Stomach (tissue), 19 donors: ENCODE measurements at regions of chr16 and their contacts with region 1.

Region 1: GRCh38 chr16:58198022-58198683 is at the start of gene CSNK2A2:
- DNase-seq: peak; percentile 75 to 91
- H3K4me3 ChIP-seq: peak within 1 kb of the TSS; percentile 77 to 98 (median 86)
- H3K27ac ChIP-seq: peak within 1 kb of the TSS in 4 of 5 donors; percentile 66 to 77 (median 71)
- H3K4me1 ChIP-seq: peaks cover 8 to 42% (median 25%) of the 10 kb centered on the region in 4 donors
- H3K27me3 ChIP-seq: peaks cover 0 to 6% (median 0%) of the 10 kb centered on the region in 3 donors
- CTCF ChIP-seq: peak in 2 of 7 experiments; percentile 18 to 72
- EP300 ChIP-seq: no peak
- POLR2A ChIP-seq: no peak
- total RNA-seq, gene CSNK2A2: 13.4 to 83.0 (median 48.3) TPM

Region 2: GRCh38 chr16:58137581-58137980 is 60.6 kb before region 1 on chr16:
- intact Hi-C with region 1: loop called (anchors 10 kb)
- DNase-seq: no peak
- H3K4me3 ChIP-seq: no peak overlapping the region
- H3K27ac ChIP-seq: no peak overlapping the region
- H3K4me1 ChIP-seq: no peaks in the 10 kb centered on the region
- H3K27me3 ChIP-seq: no peaks in the 10 kb centered on the region
- CTCF ChIP-seq: no peak
- EP300 ChIP-seq: no peak
- POLR2A ChIP-seq: no peak

Region 3: GRCh38 chr16:58280836-58281301 is 82.7 kb after region 1 on chr16:
- intact Hi-C with region 1: no loop called
- DNase-seq: peak; percentile 19 to 67
- H3K4me3 ChIP-seq: no peak overlapping the region
- H3K27ac ChIP-seq: peak overlapping the region in 3 of 5 donors; percentile 1 to 60 (median 50)
- H3K4me1 ChIP-seq: peaks cover 0 to 12% (median 0%) of the 10 kb centered on the region in 4 donors
- H3K27me3 ChIP-seq: no peaks in the 10 kb centered on the region
- CTCF ChIP-seq: no peak
- EP300 ChIP-seq: no peak
- POLR2A ChIP-seq: no peak

Region 4: GRCh38 chr16:59573528-59574271 is 1375.5 kb after region 1 on chr16:
- intact Hi-C with region 1: no loop called
- DNase-seq: no peak
- H3K4me3 ChIP-seq: no peak overlapping the region
- H3K27ac ChIP-seq: no peak overlapping the region
- H3K4me1 ChIP-seq: no peaks in the 10 kb centered on the region
- H3K27me3 ChIP-seq: no peaks in the 10 kb centered on the region
- CTCF ChIP-seq: no peak
- EP300 ChIP-seq: no peak
- POLR2A ChIP-seq: no peak